HepG2 (cell line): ENCODE measurements at regions of chr15 and their contacts with region 1.

Region 1: DNA sequence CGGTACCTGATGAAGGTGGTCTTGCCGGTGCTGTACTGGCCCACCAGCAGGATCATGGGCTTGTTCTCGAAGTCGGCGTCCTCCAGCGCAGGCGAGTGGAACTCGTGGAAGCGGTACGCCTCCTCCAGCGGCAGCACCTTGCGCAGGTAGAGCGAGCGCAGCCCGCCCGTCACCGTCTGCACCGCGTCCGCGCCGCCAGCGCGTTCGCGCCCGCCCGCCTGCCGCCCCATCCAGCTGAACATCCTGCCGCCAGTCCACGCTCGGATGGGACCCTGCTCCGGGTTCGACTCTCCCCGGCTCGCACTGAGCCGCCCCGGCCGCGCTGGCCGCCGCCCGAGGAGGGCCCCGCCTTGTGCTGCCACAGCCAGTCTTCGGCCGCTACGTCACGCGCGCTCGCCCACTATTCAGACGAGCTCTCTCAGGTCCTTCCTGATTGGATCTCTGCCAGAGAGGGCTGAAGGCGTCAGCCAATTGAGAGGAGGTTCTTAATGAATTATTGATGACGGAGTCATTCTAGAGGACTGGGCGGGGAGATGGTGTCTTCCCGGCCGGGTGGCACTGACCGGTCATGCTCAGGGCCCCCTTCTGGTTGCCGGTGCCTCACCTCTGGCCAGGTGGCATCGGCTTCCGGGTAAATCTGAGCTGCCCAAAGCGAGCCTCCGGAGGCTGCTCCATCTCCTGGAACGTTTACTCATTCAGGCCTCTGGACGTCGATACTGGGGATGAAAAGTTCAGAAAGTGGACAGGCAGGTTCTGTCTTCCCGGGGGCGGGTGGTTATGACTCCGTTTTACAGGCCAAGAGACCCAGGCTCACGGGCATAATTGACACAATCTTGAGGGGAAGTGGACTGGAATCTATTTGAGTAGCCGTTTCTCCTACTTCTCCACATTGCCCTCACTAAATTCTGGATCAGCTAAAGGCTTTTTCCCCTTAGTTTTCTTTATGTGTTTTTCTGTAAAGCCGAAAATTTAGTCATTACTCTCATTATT is at the start of gene EHD4:
- DNase-seq: peak; percentile 100
- ATAC-seq: peak; percentile 97
- H3K4me3 ChIP-seq: peak within 1 kb of the TSS; percentile 74 to 92 (median 82)
- H3K27ac ChIP-seq: peak within 1 kb of the TSS; percentile 58
- H3K4me1 ChIP-seq: peaks cover 40% of the 10 kb centered on the region
- H3K27me3 ChIP-seq: no peaks in the 10 kb centered on the region
- CTCF ChIP-seq: peak; percentile 66
- EP300 ChIP-seq: no peak
- POLR2A ChIP-seq: peak; percentile 76 to 77
- RAD21 ChIP-seq: no peak
- total RNA-seq, gene EHD4: 4.8 and 4.9 TPM in 2 replicates

Region 2: GRCh38 chr15:41860049-41860828 is 112.3 kb before region 1 on chr15:
- CTCF ChIA-PET with region 1: no interaction called
- POLR2A ChIA-PET with region 1: no interaction called
- in situ Hi-C with region 1: no loop called
- intact Hi-C with region 1: no loop called
- DNase-seq: peak; percentile 48
- ATAC-seq: peak; percentile 68
- H3K4me3 ChIP-seq: peak overlapping the region in 1 of 3 experiments; percentile 15; a peak in 1 of 6 replicates
- H3K27ac ChIP-seq: no peak overlapping the region
- H3K4me1 ChIP-seq: peaks cover 45% of the 10 kb centered on the region
- H3K27me3 ChIP-seq: peaks cover 11 to 51% of the 10 kb centered on the region in 2 experiments; a peak in 4 of 5 replicates
- CTCF ChIP-seq: peak; percentile 81
- EP300 ChIP-seq: no peak
- POLR2A ChIP-seq: no peak
- RAD21 ChIP-seq: 0 out of 2 replicates have a peak, but pooled peaks have one; percentile 21

Region 3: GRCh38 chr15:41928637-41929620 is 43.6 kb before region 1 on chr15:
- CTCF ChIA-PET with region 1: no interaction called
- POLR2A ChIA-PET with region 1: interaction called, 5 read pairs
- in situ Hi-C with region 1: no loop called
- intact Hi-C with region 1: loop called (anchors 5 kb)
- DNase-seq: no peak
- ATAC-seq: no peak
- H3K4me3 ChIP-seq: no peak overlapping the region
- H3K27ac ChIP-seq: no peak overlapping the region
- H3K4me1 ChIP-seq: peaks cover 47% of the 10 kb centered on the region
- H3K27me3 ChIP-seq: no peaks in the 10 kb centered on the region
- CTCF ChIP-seq: no peak
- EP300 ChIP-seq: no peak
- POLR2A ChIP-seq: no peak
- RAD21 ChIP-seq: no peak

Region 4: GRCh38 chr15:41961001-41961518 is 11.5 kb before region 1 on chr15:
- CTCF ChIA-PET with region 1: no interaction called
- POLR2A ChIA-PET with region 1: interaction called, 27 read pairs
- in situ Hi-C with region 1: no loop called
- intact Hi-C with region 1: no loop called
- DNase-seq: peak; percentile 79
- ATAC-seq: peak; percentile 83
- H3K4me3 ChIP-seq: peak overlapping the region in 1 of 3 experiments; percentile 45; a peak in 2 of 6 replicates
- H3K27ac ChIP-seq: peak overlapping the region; percentile 67
- H3K4me1 ChIP-seq: peaks cover 27% of the 10 kb centered on the region
- H3K27me3 ChIP-seq: no peaks in the 10 kb centered on the region
- CTCF ChIP-seq: no peak
- EP300 ChIP-seq: no peak
- POLR2A ChIP-seq: no peak
- RAD21 ChIP-seq: no peak